ENCODE measurements at regions of chr1 and their contacts with region 1.

Region 1: DNA sequence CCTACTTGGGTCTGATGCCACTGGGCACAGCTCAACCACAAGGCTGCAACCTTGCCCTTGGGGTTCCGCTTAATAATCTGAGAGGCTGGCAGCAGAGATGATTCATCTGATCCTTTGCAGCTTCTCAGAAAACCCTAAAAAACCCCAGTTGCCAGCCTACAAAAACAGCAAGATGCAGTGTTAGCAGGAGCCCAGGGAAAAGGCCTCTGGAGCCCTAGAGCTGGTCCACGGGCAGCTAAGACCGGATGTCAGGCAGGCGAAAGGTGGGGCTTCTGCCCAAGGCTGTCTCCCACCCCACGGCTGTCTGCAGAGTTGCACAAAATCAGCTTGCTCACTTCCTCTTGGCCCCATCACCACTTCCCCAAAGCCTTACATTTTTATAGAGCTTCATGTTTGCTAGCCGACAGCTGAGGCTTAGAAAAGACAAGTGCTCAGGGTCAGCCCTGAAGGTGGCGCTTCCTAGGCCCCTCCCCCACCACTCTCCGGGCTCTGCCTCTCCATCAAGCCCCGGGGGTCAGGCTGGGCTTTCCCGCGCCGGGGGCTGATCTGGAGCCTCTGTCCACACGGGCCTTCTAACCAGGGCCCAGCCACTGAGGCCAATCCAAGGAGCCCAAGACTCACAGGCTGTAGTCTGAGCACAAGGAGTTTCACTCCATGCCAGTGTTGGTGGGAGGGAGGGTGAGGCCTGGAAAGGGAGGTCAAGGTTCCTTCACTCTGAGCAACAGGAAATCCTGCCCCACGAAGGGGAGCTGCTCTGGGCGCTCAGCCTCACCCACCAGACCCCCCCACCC is 4.2 kb upstream of the ADORA3 start:
- DNase-seq: peak; percentile 87
- ATAC-seq: peak; percentile 87

Region 2: GRCh38 chr1:111323231-111323630 is 184.4 kb before region 1 on chr1:
- intact Hi-C with region 1: no loop called
- DNase-seq: no peak
- ATAC-seq: no peak

Region 3: GRCh38 chr1:111654839-111655238 is 147.2 kb after region 1 on chr1:
- intact Hi-C with region 1: loop called (anchors 5 kb)
- DNase-seq: no peak
- ATAC-seq: no peak

Region 4: GRCh38 chr1:111747282-111747734 is 239.7 kb after region 1 on chr1:
- intact Hi-C with region 1: loop called (anchors 10 kb)
- DNase-seq: no peak
- ATAC-seq: peak; percentile 45

Measured in sciatic nerve (tissue), 2 donors.